Mammary epithelial cell (primary cell): ENCODE measurements at regions of chr6 and their contacts with region 1.

Region 1: GRCh38 chr6:29477923-29478450 is 9.8 kb downstream of the MAS1L start:
- DNase-seq: no peak
- H3K4me3 ChIP-seq: no peak overlapping the region
- H3K27ac ChIP-seq: no peak overlapping the region
- H3K4me1 ChIP-seq: no peaks in the 10 kb centered on the region
- H3K27me3 ChIP-seq: no peaks in the 10 kb centered on the region
- CTCF ChIP-seq: no peak

Region 2: GRCh38 chr6:29395331-29395730 is 82.7 kb before region 1 on chr6 and contains the start of gene OR12D2:
- CTCF ChIA-PET with region 1: interaction called, 12 read pairs
- dilution Hi-C with region 1: no loop called
- in situ Hi-C with region 1: no loop called
- intact Hi-C with region 1: no loop called
- DNase-seq: no peak
- H3K4me3 ChIP-seq: no peak within 1 kb of the TSS
- H3K27ac ChIP-seq: no peak within 1 kb of the TSS
- H3K4me1 ChIP-seq: no peaks in the 10 kb centered on the region
- H3K27me3 ChIP-seq: peaks cover 4% of the 10 kb centered on the region
- CTCF ChIP-seq: no peak
- total RNA-seq, gene OR12D2: not detected

Region 3: DNA sequence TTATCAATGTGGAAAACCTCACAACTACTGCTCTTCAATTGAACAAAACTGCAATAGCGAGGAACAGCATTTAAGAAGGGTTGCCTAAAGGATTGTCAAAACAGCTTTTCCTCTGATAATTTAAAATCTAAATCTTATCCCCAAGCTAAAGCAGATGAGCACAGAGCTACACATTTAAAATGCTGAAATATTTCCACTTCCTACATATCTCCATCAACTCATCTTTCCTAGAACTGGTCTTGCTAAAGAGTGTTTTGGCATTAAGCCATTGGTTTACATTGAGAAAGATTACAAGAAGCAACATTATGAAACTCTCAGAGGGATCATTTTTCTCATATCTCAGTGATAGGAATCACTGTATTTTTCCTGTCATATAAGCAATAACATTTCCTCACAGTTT is 35.3 kb before region 1 on chr6:
- CTCF ChIA-PET with region 1: no interaction called
- dilution Hi-C with region 1: loop called (anchors 5 kb)
- in situ Hi-C with region 1: no loop called
- intact Hi-C with region 1: no loop called
- DNase-seq: no peak
- H3K4me3 ChIP-seq: no peak overlapping the region
- H3K27ac ChIP-seq: no peak overlapping the region
- H3K4me1 ChIP-seq: peaks cover 5% of the 10 kb centered on the region
- H3K27me3 ChIP-seq: peaks cover 3% of the 10 kb centered on the region
- CTCF ChIP-seq: no peak